Astrocyte of the cerebellum (primary cell): ENCODE measurements at regions of chr4 and their contacts with region 1.

Region 1: DNA sequence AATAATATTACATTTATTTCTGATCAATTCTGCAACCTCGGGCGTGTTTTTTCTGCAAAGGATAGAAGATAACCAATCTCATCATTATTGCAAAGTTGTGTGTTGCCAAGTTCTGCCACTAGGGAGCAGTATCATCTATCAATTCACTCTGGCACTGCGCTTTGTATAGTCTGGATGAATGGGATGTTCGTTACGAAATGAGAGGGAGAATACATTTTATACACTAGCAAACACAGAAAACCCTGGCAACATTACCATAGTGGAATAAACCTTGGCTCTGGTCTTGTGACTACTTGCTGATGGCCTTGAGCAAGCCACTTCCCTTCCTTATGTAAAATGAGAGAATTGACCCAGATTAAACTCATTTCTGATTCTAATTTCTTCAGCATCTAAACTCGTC is 97.5 kb upstream of the ZNF518B start:
- DNase-seq: peak; percentile 56
- H3K4me3 ChIP-seq: no peak overlapping the region
- CTCF ChIP-seq: peak; percentile 81

Region 2: GRCh38 chr4:10164877-10165283 is 389.8 kb before region 1 on chr4:
- in situ Hi-C with region 1: loop called (anchors 5 kb)
- DNase-seq: no peak
- H3K4me3 ChIP-seq: no peak overlapping the region
- CTCF ChIP-seq: peak; percentile 62